Heart left ventricle (tissue), 16 donors: ENCODE measurements at regions of chr1 and their contacts with region 1.

Region 1: DNA sequence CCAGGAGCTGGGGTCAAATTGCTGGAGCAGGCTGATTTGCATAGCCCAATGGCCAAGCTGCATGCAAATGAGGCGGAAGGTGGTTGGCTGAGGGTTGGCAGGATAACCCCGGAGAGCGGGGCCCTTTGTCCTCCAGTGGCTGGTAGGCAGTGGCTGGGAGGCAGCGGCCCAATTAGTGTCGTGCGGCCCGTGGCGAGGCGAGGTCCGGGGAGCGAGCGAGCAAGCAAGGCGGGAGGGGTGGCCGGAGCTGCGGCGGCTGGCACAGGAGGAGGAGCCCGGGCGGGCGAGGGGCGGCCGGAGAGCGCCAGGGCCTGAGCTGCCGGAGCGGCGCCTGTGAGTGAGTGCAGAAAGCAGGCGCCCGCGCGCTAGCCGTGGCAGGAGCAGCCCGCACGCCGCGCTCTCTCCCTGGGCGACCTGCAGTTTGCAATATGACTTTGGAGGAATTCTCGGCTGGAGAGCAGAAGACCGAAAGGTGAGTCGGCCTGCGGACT is at the start of gene GADD45A:
- DNase-seq: peak; percentile 99
- ATAC-seq: peak; percentile 92 to 96 (median 96)
- H3K4me3 ChIP-seq: peak within 1 kb of the TSS; percentile 64 to 97 (median 84)
- H3K27ac ChIP-seq: peak within 1 kb of the TSS; percentile 94 to 99 (median 98)
- H3K4me1 ChIP-seq: peaks cover 6 to 54% (median 30%) of the 10 kb centered on the region in 12 donors
- H3K27me3 ChIP-seq: no peaks in the 10 kb centered on the region
- CTCF ChIP-seq: no peak
- POLR2A ChIP-seq: peak; percentile 98 to 100
- total RNA-seq, gene GADD45A: 26.5 to 119 (median 45.8) TPM

Region 2: GRCh38 chr1:67062412-67062811 is 622.7 kb before region 1 on chr1:
- intact Hi-C with region 1: no loop called
- DNase-seq: no peak
- ATAC-seq: no peak
- H3K4me3 ChIP-seq: no peak overlapping the region
- H3K27ac ChIP-seq: no peak overlapping the region
- H3K4me1 ChIP-seq: no peaks in the 10 kb centered on the region
- H3K27me3 ChIP-seq: no peaks in the 10 kb centered on the region
- CTCF ChIP-seq: no peak
- POLR2A ChIP-seq: no peak

Region 3: GRCh38 chr1:67134695-67135094 is 550.4 kb before region 1 on chr1 and contains the start of gene C1orf141:
- intact Hi-C with region 1: no loop called
- DNase-seq: peak in 2 of 5 donors; percentile 26 to 47
- ATAC-seq: peak; percentile 51 to 60 (median 57)
- H3K4me3 ChIP-seq: peak within 1 kb of the TSS in 10 of 12 donors; percentile 20 to 52 (median 39)
- H3K27ac ChIP-seq: peak within 1 kb of the TSS in 1 of 12 donors; percentile 13
- H3K4me1 ChIP-seq: peaks cover 0 to 10% (median 5%) of the 10 kb centered on the region in 12 donors
- H3K27me3 ChIP-seq: peaks cover 0 to 3% (median 0%) of the 10 kb centered on the region in 9 donors
- CTCF ChIP-seq: no peak
- POLR2A ChIP-seq: no peak
- total RNA-seq, gene C1orf141: not detected

Region 4: GRCh38 chr1:67430352-67431155 is 254.6 kb before region 1 on chr1 and contains the start of gene SERBP1:
- intact Hi-C with region 1: loop called in 1 of 10 experiments (anchors 5 kb)
- DNase-seq: peak; percentile 96 to 98 (median 98)
- ATAC-seq: peak; percentile 97 to 99 (median 98)
- H3K4me3 ChIP-seq: peak within 1 kb of the TSS; percentile 59 to 95 (median 84)
- H3K27ac ChIP-seq: peak within 1 kb of the TSS; percentile 76 to 97 (median 92)
- H3K4me1 ChIP-seq: peaks cover 0 to 63% (median 36%) of the 10 kb centered on the region in 12 donors
- H3K27me3 ChIP-seq: no peaks in the 10 kb centered on the region
- CTCF ChIP-seq: no peak
- POLR2A ChIP-seq: peak in 1 of 2 donors; percentile 72
- total RNA-seq, gene SERBP1: 125 to 163 (median 148) TPM

Region 5: GRCh38 chr1:67561704-67562113 is 123.4 kb before region 1 on chr1:
- intact Hi-C with region 1: loop called in 9 of 10 experiments (anchors 1 to 10 kb)
- DNase-seq: peak; percentile 88 to 94 (median 92)
- ATAC-seq: peak; percentile 49 to 81 (median 78)
- H3K4me3 ChIP-seq: no peak overlapping the region
- H3K27ac ChIP-seq: peak overlapping the region in 9 of 12 donors; percentile 8 to 55 (median 28)
- H3K4me1 ChIP-seq: peaks cover 0 to 33% (median 19%) of the 10 kb centered on the region in 12 donors
- H3K27me3 ChIP-seq: no peaks in the 10 kb centered on the region
- CTCF ChIP-seq: peak; percentile 78 to 90 (median 86)
- POLR2A ChIP-seq: no peak

Region 6: DNA sequence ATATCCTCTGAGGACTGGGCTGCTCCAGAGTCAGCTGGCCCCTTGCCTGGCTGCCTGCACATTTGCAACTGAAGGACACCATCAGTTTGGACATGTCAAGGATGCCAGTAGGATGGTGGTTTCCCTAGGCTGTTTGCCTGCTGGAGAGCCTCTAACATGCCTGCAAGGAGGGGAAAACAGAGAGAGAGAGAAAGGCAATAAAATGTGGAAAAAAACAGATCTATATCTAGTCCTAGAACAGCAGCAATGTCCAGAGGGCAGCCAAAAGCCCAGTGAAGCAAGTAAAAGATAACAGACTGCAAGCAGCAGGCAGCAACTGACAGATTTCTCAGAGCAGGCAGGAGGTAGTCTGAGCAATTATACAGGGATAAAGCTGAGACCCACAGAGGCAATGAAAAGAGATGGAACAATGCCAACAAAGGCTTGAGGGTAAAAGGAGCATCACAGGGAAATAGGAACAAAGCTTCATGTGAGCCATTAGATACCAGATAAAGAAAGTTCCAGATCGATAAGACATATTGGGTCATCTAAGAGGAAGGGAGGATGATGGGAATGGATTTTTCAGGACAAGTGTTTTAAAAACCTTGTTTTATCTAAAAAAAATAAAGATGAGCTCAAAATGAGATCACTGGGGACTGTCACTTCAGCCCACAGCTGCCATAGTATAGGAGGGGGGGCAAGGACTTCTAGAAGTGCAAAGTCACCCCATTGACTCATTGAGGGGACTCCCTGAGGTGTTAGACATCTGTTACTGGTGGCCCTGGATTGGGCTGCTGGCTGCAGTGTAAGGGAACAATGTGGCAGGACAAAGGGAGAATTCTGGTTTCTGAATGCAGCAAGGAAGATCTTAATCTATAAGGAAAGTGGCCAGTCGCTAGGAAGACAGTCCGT is 38.7 kb before region 1 on chr1:
- intact Hi-C with region 1: loop called in 2 of 10 experiments (anchors 2 to 5 kb)
- DNase-seq: peak in 4 of 5 donors; percentile 34 to 74 (median 42)
- ATAC-seq: peak; percentile 57 to 75 (median 64)
- H3K4me3 ChIP-seq: no peak overlapping the region
- H3K27ac ChIP-seq: peak overlapping the region in 11 of 12 donors; percentile 23 to 61 (median 53)
- H3K4me1 ChIP-seq: peaks cover 6 to 31% (median 21%) of the 10 kb centered on the region in 12 donors
- H3K27me3 ChIP-seq: no peaks in the 10 kb centered on the region
- CTCF ChIP-seq: no peak
- POLR2A ChIP-seq: no peak

Region 7: GRCh38 chr1:67735806-67736627 is 50.9 kb after region 1 on chr1:
- intact Hi-C with region 1: loop called in 4 of 10 experiments (anchors 5 to 10 kb)
- DNase-seq: peak; percentile 74 to 85 (median 75)
- ATAC-seq: peak; percentile 63 to 91 (median 89)
- H3K4me3 ChIP-seq: peak overlapping the region in 5 of 12 donors; percentile 10 to 23 (median 21)
- H3K27ac ChIP-seq: peak overlapping the region; percentile 5 to 79 (median 64)
- H3K4me1 ChIP-seq: peaks cover 3 to 60% (median 47%) of the 10 kb centered on the region in 12 donors
- H3K27me3 ChIP-seq: no peaks in the 10 kb centered on the region
- CTCF ChIP-seq: no peak
- POLR2A ChIP-seq: no peak

Region 8: DNA sequence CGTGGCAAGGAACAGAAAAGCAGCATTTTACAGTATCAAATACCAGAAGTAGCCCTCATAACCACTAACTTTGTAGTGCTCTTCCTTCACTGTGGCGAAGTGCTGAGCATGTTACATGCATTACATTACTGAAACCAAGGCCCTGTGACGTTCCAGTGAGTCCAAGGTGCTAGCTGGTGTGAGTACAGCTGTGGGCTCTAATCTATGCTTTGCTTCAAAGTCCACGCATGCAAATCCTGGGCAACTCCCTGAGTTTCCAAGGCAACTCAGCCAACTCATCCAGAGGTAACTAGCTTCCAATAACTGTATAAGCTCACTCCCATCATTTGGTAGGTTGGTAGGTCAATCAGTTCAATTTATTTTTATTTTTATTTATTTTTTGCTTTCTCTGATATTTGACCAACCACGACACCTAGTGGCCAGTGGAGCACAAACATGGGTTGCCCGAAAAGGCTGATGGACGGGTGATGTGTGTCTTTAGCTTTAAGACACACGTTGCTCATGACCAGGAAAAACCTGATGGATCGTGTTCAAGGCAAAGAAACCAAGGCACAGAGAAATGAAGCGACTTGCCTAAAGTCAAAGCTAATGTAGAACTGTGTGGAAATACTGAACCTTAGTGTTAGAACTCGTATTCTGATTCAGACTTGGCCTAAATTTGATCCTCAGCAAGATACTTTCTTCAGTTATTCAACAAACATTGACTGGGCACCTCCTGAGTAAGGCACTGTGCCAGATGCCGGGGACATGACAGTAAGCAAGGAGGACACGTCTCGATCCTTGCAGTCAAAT is 75.1 kb after region 1 on chr1:
- intact Hi-C with region 1: loop called in 6 of 10 experiments (anchors 2 to 5 kb)
- DNase-seq: peak in 4 of 5 donors; percentile 38 to 61 (median 45)
- ATAC-seq: peak; percentile 59 to 77 (median 68)
- H3K4me3 ChIP-seq: no peak overlapping the region
- H3K27ac ChIP-seq: peak overlapping the region in 7 of 12 donors; percentile 5 to 34 (median 21)
- H3K4me1 ChIP-seq: peaks cover 0 to 32% (median 16%) of the 10 kb centered on the region in 12 donors
- H3K27me3 ChIP-seq: no peaks in the 10 kb centered on the region
- CTCF ChIP-seq: peak; percentile 83 to 95 (median 90)
- POLR2A ChIP-seq: no peak